ENCODE measurements at regions of chr1 and their contacts with region 1.

Region 1: DNA sequence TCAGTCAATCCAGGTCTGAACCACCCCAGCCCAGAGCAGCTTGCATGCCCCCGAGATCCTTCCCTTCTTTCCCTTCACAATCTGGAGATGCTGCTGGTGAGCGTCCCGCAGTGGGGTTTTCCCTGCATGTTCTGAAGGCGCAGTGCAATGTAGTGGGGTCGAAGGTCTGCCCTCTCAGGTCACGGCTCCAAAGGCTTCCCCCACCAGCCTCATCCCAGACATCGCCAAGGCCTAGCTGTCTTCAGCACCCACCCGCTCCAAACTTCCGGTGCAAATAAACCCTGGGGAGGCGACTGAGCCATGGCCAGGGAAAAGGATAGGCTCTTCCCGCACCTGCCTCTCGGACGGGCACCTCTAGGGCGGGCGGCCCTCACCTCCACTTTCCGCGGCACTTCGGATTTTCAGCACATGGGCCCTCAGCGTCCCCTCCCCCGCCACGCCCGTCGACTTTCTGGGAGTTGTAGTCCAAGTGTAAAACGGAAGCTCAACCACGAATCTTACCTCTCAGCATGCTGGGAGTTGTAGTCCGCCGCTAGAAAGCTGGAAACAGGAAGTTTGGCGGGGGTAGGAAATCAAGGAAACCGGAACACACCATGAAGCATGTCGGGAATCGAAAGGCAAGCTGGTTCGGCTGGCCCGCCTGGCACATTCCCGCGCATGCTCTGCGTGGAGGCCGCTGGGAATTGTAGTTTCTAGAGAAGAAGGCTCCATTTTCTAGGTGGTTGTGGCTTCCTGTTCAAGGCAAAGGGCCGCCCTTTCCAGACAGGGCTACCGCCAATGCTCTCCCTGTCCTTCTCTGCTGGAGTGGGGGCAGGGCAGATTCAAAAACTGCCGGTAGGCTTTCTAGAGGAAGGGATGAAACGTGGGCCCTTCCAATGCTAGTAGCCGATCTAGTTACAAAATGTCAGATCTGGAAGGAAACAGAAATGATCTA is at the start of gene MRPL24:
- DNase-seq: peak; percentile 96 to 98 (median 97)
- H3K4me3 ChIP-seq: peak within 1 kb of the TSS; percentile 74
- H3K27ac ChIP-seq: peak within 1 kb of the TSS; percentile 13 to 83
- H3K4me1 ChIP-seq: peaks cover 4% of the 10 kb centered on the region
- H3K27me3 ChIP-seq: no peaks in the 10 kb centered on the region
- CTCF ChIP-seq: no peak
- EP300 ChIP-seq: peak; percentile 39
- POLR2A ChIP-seq: peak; percentile 35
- total RNA-seq, gene MRPL24: 23.1 to 83.3 (median 61.8) TPM

Region 2: GRCh38 chr1:156728597-156729462 is 12.1 kb before region 1 on chr1 and contains the start of gene ISG20L2:
- intact Hi-C with region 1: loop called in 1 of 4 experiments (anchors 1 kb)
- DNase-seq: peak; percentile 97 to 99 (median 98)
- H3K4me3 ChIP-seq: peak within 1 kb of the TSS; percentile 62
- H3K27ac ChIP-seq: peak within 1 kb of the TSS; percentile 93 to 98
- H3K4me1 ChIP-seq: peaks cover 16% of the 10 kb centered on the region
- H3K27me3 ChIP-seq: no peaks in the 10 kb centered on the region
- CTCF ChIP-seq: peak in 1 of 3 donors; percentile 14
- EP300 ChIP-seq: peak; percentile 86
- POLR2A ChIP-seq: peak; percentile 91
- total RNA-seq, gene ISG20L2: 11.7 to 33.8 (median 26.1) TPM

Region 3: DNA sequence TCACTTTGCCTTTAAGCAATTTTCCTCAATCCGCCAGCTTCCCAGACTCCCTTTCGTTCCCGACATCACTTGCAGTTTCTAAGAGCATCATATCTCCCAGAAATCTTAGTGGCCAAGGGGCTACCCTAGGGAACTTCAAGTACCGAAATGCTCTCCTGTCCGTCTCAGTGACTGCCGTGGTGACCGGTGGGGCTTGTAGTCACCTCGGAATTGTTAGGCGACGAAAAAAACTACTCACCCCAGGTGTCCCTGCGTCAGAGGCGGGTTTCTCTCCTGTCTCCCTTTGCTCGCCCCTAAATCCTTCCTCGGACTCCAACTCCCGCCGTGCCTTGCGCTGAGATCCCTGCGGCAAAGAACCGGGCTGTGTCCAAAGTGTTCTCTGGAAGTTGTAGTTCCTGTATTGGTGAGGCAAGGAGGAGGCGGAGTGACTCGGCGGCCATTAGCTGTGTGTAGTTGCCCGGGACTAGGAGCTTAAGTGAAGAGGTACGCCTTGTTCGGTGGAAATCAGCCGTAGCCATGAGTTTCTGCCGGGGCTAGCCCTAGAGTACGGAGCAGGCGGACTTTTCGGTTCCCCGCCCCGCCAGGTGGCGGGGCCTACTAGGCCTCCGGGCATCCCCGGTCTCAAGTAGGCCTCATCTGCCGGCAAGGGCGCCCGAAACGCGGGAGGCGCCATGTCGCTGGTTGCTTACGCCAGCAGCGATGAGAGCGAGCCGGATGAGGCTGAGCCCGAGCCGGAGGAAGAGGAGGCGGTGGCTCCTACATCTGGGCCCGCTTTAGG is 26.3 kb after region 1 on chr1 and contains the start of gene PRCC:
- intact Hi-C with region 1: loop called in 1 of 4 experiments (anchors 2 kb)
- DNase-seq: peak; percentile 96 to 98 (median 97)
- H3K4me3 ChIP-seq: peak within 1 kb of the TSS; percentile 85
- H3K27ac ChIP-seq: peak within 1 kb of the TSS; percentile 70 to 83
- H3K4me1 ChIP-seq: no peaks in the 10 kb centered on the region
- H3K27me3 ChIP-seq: no peaks in the 10 kb centered on the region
- CTCF ChIP-seq: no peak
- EP300 ChIP-seq: no peak
- POLR2A ChIP-seq: peak; percentile 70
- total RNA-seq, gene PRCC: 24.7 to 65.2 (median 50.9) TPM

Region 4: GRCh38 chr1:156781585-156782186 is 40.7 kb after region 1 on chr1:
- intact Hi-C with region 1: no loop called
- DNase-seq: peak in 1 of 5 donors; percentile 39
- H3K4me3 ChIP-seq: no peak overlapping the region
- H3K27ac ChIP-seq: no peak overlapping the region
- H3K4me1 ChIP-seq: peaks cover 4% of the 10 kb centered on the region
- H3K27me3 ChIP-seq: no peaks in the 10 kb centered on the region
- CTCF ChIP-seq: no peak
- EP300 ChIP-seq: no peak
- POLR2A ChIP-seq: no peak

Region 5: DNA sequence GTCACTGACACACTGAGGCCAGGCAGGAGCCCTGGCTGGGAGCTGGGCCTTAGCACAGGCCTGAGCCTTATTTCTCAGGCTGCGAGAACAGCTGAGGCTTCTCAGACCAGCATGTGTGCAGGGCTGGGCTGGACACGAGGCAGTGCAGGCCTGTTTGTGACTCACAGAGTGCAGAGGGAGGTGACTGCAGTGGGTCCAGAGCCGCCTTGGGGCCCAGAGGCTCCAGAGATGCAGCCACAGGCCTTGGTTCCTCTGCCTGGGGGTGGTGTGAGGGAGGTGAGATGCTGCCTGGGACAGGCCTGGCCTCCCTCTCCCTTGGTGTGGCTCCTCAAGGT is 458.4 kb after region 1 on chr1:
- intact Hi-C with region 1: no loop called
- DNase-seq: no peak
- H3K4me3 ChIP-seq: no peak overlapping the region
- H3K27ac ChIP-seq: no peak overlapping the region
- H3K4me1 ChIP-seq: no peaks in the 10 kb centered on the region
- H3K27me3 ChIP-seq: no peaks in the 10 kb centered on the region
- CTCF ChIP-seq: no peak
- EP300 ChIP-seq: no peak
- POLR2A ChIP-seq: no peak